AG04449 (cell line): ENCODE measurements at regions of chr16 and their contacts with region 1.

Region 1: DNA sequence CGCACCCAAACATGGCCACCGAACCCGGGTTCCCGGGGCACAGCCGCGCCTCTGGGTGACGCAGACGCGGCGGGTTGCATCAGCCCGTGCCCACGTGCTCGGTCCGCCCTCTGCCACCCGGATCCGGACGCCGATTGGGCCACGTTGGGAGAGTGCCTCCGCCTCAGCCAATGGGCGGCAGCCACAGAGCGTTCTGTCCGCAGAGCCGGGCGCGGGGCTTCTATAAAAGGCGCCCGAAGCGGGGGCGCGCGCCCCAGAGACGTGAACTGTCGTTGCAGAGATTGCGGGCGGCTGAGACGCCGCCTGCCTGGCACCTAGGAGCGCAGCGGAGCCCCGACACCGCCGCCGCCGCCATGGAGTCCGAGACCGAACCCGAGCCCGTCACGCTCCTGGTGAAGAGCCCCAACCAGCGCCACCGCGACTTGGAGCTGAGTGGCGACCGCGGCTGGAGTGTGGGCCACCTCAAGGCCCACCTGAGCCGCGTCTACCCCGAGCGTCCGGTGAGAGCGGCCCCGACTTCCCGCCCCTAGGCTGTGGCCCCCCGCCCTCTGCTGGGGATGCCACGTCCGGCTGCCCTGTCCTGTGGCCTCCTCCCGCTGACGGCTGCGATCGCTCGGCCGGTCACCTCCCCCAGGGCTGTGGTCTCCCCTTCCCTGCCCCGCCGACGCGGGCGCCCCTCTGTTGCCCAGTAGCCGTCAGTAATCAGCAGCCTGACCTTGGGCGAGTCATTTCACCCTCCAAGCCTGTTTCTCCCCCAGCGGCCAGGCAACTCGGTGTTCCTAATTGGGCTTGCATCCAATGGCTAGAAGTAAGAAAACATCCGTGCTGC is at the start of gene HERPUD1:
- DNase-seq: peak; percentile 82
- H3K4me3 ChIP-seq: peak within 1 kb of the TSS; percentile 89
- CTCF ChIP-seq: peak; percentile 2

Region 2: DNA sequence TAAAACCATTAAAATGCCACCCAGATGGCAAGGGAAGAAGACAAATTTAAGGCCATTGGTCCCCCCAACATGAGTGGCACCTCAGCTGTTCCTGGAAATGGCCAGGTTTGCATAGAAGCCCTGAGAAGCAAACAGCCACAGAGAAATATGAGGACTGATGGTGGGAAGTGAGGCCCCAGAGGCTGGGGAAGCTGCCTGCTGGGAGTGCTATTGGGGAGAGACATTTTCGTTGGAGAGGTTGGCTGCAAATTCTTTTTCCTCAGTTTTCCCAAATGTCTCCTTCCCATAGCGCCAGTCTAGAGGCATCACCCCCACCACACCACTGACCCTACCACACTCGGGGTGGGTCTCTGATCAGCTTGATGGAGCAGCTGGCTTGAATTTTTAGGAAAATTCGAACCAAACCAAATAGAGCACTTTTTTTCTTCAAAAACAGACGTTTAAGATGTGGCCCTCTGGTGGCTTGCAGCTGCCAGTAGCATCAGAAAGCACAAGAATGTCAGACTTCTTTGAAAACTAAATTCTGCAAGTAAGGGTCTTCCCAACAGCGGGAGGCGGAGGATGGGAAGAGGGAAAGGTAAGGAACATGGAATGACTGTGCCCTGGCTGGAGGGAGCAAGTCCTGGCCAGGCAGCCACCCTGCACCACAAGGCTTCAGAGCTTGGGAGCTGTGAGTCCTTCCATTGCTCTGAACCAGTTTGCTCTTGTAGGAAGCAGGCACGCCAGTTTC is 80.3 kb before region 1 on chr16:
- CTCF ChIA-PET with region 1: interaction called, 5 read pairs
- POLR2A ChIA-PET with region 1: interaction called, 10 read pairs
- DNase-seq: no peak
- H3K4me3 ChIP-seq: no peak overlapping the region
- CTCF ChIP-seq: peak; percentile 52

Region 3: DNA sequence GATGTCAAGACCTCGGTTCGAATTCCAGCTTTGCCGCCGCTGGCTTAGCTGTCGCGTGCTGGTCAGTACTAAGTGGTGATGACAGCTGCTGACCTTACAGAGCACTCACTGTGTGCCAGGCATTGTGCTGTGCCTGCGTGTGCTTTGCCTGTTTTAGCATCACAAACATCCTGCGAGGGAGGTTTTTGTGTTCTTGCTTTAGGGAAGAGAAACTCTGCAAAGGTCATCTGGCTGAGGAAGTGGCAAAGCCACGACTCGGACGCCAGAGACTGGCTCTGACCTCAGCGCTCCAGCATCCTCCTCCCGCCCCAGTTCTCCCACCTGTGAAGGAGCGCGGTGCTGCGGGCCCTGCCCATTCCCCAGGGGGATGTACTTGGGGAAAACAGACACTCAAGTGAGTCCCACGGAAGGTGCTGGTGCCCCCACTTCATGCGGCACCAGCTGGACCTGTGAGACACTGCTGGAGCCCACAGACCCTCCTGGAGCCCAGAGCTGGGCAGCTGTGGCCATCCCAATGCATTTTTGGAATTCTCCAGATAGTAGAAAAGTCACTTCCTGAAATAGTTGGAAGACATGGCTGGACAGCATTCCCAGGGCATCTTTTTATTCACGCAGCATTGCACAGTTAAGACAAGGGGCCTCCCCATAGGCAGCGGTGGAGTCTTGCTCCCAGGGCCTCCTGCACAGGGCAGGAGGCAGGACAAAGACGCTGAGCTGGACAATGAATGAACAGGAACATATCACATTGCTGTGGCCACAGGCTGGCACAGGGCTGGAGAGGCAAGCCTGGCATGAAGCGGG is 20.1 kb before region 1 on chr16:
- CTCF ChIA-PET with region 1: interaction called, 6 read pairs
- POLR2A ChIA-PET with region 1: interaction called, 25 read pairs
- DNase-seq: no peak
- H3K4me3 ChIP-seq: no peak overlapping the region
- CTCF ChIP-seq: no peak

Region 4: DNA sequence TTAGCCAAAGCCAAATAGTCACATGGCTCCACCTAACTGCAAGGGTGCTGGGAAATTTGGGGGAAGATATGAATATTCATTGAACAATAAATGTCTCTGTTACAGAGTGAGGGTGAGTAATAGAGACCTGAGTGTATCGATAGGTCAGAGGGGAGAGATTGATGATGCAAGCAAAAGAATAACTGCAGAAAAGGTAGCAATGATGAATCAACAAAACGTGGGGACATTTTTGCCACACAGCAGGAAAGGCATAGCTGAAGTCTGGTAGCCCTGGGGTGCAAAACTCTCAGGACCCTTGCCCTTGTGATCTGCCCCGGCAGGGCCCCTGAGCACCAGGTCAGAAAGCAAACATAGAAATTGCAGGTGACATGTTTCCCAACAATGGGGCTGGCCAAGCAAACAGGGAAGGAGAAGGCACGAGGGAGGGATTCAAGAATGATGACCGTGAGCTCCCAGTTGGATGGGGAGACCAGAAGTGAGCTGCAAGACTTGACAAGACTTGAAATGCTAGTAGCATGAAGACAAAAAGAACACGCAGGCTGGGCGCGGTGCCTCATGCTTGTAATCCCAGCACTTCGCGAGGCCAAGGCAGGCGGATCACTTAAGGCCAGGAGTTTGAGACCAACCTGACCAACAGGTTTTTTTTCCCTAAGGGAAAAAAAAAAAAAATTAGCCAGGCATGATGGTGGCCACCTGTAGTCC is 12.9 kb before region 1 on chr16:
- CTCF ChIA-PET with region 1: interaction called, 3 read pairs
- POLR2A ChIA-PET with region 1: interaction called, 25 read pairs
- DNase-seq: no peak
- H3K4me3 ChIP-seq: no peak overlapping the region
- CTCF ChIP-seq: no peak